CD14-positive monocyte (primary cell): ENCODE measurements at regions of chr17 and their contacts with region 1.

Region 1: GRCh38 chr17:8138672-8139371 is 13.4 kb downstream of the PER1 start:
- DNase-seq: peak; percentile 88 to 93 (median 90)
- H3K4me3 ChIP-seq: peak overlapping the region; percentile 4 to 68 (median 21)
- H3K4me3 Mint-ChIP-seq: no peak overlapping the region
- H3K27ac ChIP-seq: peak overlapping the region; percentile 55 to 58
- H3K27ac Mint-ChIP-seq: no peak overlapping the region
- H3K4me1 ChIP-seq: peaks cover 34 to 40% of the 10 kb centered on the region in 2 donors
- H3K4me1 Mint-ChIP-seq: no peaks in the 10 kb centered on the region
- H3K27me3 ChIP-seq: peaks cover 0 to 10% of the 10 kb centered on the region in 2 donors
- H3K27me3 Mint-ChIP-seq: peaks cover 6 to 18% (median 11%) of the 10 kb centered on the region in 3 donors
- CTCF ChIP-seq: peak; percentile 94

Region 2: DNA sequence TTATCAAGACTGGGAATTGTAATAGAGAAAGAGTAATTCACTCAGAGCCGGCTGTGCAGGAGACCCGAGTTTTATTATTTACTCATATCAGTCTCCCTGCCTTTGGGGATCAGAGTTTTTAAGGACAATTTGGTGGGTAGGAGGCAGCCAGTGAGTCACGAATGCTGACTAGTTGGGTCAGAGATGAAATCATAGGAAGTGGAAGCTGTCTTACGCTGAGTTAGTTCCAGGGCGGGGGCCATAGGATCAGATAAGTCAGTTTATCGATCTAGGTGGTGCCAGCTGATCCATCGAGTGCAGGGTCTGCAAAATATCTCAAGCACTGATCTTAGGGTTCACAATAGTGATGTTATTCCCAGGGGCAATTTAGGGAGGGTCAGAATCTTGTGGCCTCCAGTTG is 156.7 kb before region 1 on chr17:
- intact Hi-C with region 1: no loop called
- DNase-seq: peak; percentile 43 to 65 (median 65)
- H3K4me3 ChIP-seq: no peak overlapping the region
- H3K4me3 Mint-ChIP-seq: no peak overlapping the region
- H3K27ac ChIP-seq: no peak overlapping the region
- H3K27ac Mint-ChIP-seq: peak overlapping the region in 2 of 7 donors; percentile 67 to 82
- H3K4me1 ChIP-seq: peaks cover 3 to 12% of the 10 kb centered on the region in 2 donors
- H3K4me1 Mint-ChIP-seq: peaks cover 12% of the 10 kb centered on the region
- H3K27me3 ChIP-seq: no peaks in the 10 kb centered on the region
- H3K27me3 Mint-ChIP-seq: peaks cover 0 to 2% (median 2%) of the 10 kb centered on the region in 3 donors
- CTCF ChIP-seq: no peak

Region 3: DNA sequence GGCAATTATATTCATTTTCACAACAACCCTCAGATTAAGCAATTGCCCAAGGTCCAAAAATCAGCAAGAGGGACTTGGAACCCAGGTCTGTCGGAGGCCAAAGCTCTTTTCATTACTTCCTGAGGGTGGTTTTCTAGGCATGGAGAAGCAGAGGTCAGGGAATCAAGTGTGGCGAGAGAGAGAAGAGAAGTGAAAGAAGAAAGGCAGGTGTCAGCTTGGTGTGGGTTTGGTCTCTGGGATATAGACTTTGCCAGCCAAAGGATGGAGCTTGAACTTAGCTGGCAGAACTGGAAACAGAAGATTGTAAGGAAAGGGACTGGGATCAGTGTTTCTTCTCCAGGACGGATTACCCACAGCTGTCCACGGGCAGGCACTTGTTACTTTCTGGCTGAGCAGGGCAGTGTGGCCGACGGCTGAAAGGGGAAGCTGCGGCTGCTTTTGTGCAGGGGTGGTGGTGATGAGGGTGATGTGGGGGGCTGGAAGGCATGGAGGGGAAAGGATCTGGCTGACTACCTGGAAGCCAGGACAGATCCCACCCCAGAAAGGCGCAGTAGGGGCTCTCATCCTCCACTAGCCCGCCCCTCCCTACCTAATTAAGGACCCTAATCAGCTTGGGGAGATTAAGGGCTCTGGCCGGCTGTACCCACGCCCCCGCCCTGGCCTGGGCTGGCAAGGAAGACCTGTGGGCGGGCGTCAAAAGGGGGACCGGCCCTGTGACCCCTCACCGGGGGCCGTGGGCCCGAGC is 136.7 kb before region 1 on chr17 and contains the start of gene GUCY2D:
- intact Hi-C with region 1: no loop called
- DNase-seq: peak in 2 of 3 donors; percentile 44 to 49
- H3K4me3 ChIP-seq: peak within 1 kb of the TSS; percentile 36 to 77 (median 73)
- H3K4me3 Mint-ChIP-seq: peak within 1 kb of the TSS; percentile 96 to 98
- H3K27ac ChIP-seq: peak within 1 kb of the TSS in 1 of 2 donors; percentile 27
- H3K27ac Mint-ChIP-seq: peak within 1 kb of the TSS; percentile 41 to 85 (median 63)
- H3K4me1 ChIP-seq: peaks cover 15 to 24% of the 10 kb centered on the region in 2 donors
- H3K4me1 Mint-ChIP-seq: peaks cover 31% of the 10 kb centered on the region
- H3K27me3 ChIP-seq: peaks cover 0 to 12% of the 10 kb centered on the region in 2 donors
- H3K27me3 Mint-ChIP-seq: peaks cover 15 to 20% (median 19%) of the 10 kb centered on the region in 3 donors
- CTCF ChIP-seq: no peak
- polyA plus RNA-seq, gene GUCY2D: 0.04 to 0.46 TPM in 2 of 3 donors, not detected in the other

Region 4: DNA sequence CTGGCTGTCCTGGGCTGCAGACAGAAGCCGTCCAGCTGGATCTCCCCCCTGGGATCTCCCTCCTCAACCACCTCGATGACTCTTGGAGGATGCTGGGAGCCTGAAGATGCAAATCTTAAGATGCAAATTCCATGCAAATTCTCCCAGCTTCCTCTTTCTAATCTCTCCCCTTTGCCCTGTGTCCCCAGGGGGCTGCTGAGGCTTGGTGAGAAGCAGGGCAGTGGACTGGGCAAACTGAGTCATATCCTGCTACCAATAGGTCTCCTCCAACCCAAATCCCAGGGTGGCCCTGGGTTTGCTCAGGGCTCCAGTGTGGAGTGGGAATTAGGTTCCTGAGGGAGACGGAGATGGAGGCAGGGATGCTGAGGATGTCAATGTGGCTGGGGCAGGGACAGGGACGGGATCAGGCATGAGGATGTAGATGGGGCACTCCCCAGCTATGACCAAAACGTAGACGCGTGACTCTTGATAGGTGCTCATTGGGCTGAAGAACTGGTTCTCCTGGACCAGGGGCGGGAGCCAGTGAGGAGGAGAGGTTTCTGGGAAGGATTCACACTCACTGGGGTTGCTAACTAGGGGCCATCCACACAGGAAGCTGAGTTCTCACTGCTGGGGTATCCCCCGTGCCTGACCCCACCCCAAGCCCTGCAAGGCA is 47.7 kb before region 1 on chr17:
- intact Hi-C with region 1: no loop called
- DNase-seq: peak in 2 of 3 donors; percentile 17 to 63
- H3K4me3 ChIP-seq: no peak overlapping the region
- H3K4me3 Mint-ChIP-seq: peak overlapping the region in 1 of 2 donors; percentile 37
- H3K27ac ChIP-seq: no peak overlapping the region
- H3K27ac Mint-ChIP-seq: no peak overlapping the region
- H3K4me1 ChIP-seq: peaks cover 0 to 7% of the 10 kb centered on the region in 2 donors
- H3K4me1 Mint-ChIP-seq: peaks cover 9% of the 10 kb centered on the region
- H3K27me3 ChIP-seq: peaks cover 0 to 10% of the 10 kb centered on the region in 2 donors
- H3K27me3 Mint-ChIP-seq: peaks cover 25 to 58% (median 34%) of the 10 kb centered on the region in 3 donors
- CTCF ChIP-seq: no peak

Region 5: DNA sequence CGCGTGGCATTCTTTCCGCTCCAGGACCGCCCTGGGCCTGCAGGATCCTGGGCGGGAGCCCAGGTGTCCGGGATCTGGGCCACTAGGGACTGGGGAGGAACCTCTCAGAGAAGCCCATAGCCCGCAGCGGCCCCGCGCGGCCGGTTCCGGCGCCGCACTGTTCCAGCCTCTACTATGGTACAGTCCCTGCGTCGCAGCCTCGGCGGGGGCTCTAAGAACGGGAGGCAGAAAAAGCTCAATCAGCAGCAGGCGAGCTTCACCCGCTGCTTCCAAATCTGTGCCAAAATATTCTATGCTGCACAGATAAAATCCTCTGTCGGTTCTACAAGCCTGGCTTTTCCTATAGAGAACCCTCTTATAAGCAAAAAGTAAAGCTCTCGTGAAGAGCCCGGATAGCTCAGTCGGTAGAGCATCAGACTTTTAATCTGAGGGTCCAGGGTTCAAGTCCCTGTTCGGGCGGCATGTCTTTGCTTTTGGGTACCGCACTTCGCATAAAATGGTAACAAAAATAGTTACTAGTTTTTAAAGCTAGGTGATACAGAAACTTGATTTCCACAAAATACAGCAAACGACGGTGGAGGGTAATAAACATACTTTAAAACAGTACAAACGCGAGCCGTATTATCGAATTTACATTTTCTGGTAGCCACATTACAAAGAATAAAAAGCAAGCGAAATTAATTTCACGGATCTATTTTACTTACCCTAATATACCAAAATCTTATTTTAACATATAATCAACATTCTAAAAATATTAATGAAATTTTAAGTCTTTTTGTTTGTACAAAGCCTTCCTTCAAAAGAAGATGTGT is 19.8 kb before region 1 on chr17:
- intact Hi-C with region 1: no loop called
- DNase-seq: peak; percentile 60 to 85 (median 79)
- H3K4me3 ChIP-seq: peak overlapping the region; percentile 45 to 77 (median 61)
- H3K4me3 Mint-ChIP-seq: peak overlapping the region; percentile 85 to 93
- H3K27ac ChIP-seq: no peak overlapping the region
- H3K27ac Mint-ChIP-seq: peak overlapping the region; percentile 85 to 91 (median 87)
- H3K4me1 ChIP-seq: peaks cover 56 to 69% of the 10 kb centered on the region in 2 donors
- H3K4me1 Mint-ChIP-seq: peaks cover 61% of the 10 kb centered on the region
- H3K27me3 ChIP-seq: peaks cover 45 to 78% of the 10 kb centered on the region in 2 donors
- H3K27me3 Mint-ChIP-seq: peaks cover 73 to 91% (median 88%) of the 10 kb centered on the region in 3 donors
- CTCF ChIP-seq: peak; percentile 96

Region 6: DNA sequence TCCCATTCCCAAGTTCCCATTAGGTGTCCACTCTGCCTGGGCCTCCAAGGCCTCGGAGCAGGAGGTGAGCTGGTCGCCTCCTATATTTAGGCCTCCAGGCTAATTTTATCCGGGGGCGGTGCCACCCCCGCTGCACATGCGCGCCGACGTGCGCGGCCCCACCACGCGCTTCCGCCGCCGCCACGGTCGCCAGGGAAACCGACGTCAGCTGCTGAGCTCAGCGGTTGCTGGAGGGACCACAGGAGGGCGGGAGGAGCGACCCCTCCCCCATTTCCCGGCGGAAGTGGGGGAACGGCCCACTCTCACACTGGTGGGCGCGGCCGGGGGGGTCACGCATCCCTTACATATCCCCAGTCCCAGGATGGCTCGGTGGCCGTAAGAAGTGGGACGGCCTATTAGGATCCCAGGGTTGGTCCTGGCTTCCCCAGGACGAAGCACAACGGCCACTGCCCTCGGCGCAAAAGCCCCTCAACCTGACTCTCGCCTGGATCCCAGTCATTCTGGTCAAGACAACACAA is 12.4 kb after region 1 on chr17:
- intact Hi-C with region 1: loop called in 1 of 2 experiments (anchors 1 kb)
- DNase-seq: peak; percentile 72 to 75 (median 75)
- H3K4me3 ChIP-seq: peak overlapping the region; percentile 52 to 100 (median 88)
- H3K4me3 Mint-ChIP-seq: peak overlapping the region; percentile 97 to 99
- H3K27ac ChIP-seq: peak overlapping the region; percentile 97 to 99
- H3K27ac Mint-ChIP-seq: peak overlapping the region in 5 of 7 donors; percentile 78 to 99 (median 96)
- H3K4me1 ChIP-seq: peaks cover 46 to 60% of the 10 kb centered on the region in 2 donors
- H3K4me1 Mint-ChIP-seq: peaks cover 28% of the 10 kb centered on the region
- H3K27me3 ChIP-seq: no peaks in the 10 kb centered on the region
- H3K27me3 Mint-ChIP-seq: peaks cover 0 to 14% (median 0%) of the 10 kb centered on the region in 3 donors
- CTCF ChIP-seq: no peak

Region 7: GRCh38 chr17:8156246-8156992 is 17.6 kb after region 1 on chr17:
- intact Hi-C with region 1: loop called in 1 of 2 experiments (anchors 2 kb)
- DNase-seq: peak; percentile 100
- H3K4me3 ChIP-seq: peak overlapping the region; percentile 65 to 100 (median 88)
- H3K4me3 Mint-ChIP-seq: no peak overlapping the region
- H3K27ac ChIP-seq: peak overlapping the region; percentile 89 to 99
- H3K27ac Mint-ChIP-seq: no peak overlapping the region
- H3K4me1 ChIP-seq: peaks cover 63 to 93% of the 10 kb centered on the region in 2 donors
- H3K4me1 Mint-ChIP-seq: peaks cover 50% of the 10 kb centered on the region
- H3K27me3 ChIP-seq: no peaks in the 10 kb centered on the region
- H3K27me3 Mint-ChIP-seq: peaks cover 0 to 5% (median 0%) of the 10 kb centered on the region in 3 donors
- CTCF ChIP-seq: no peak

Region 8: DNA sequence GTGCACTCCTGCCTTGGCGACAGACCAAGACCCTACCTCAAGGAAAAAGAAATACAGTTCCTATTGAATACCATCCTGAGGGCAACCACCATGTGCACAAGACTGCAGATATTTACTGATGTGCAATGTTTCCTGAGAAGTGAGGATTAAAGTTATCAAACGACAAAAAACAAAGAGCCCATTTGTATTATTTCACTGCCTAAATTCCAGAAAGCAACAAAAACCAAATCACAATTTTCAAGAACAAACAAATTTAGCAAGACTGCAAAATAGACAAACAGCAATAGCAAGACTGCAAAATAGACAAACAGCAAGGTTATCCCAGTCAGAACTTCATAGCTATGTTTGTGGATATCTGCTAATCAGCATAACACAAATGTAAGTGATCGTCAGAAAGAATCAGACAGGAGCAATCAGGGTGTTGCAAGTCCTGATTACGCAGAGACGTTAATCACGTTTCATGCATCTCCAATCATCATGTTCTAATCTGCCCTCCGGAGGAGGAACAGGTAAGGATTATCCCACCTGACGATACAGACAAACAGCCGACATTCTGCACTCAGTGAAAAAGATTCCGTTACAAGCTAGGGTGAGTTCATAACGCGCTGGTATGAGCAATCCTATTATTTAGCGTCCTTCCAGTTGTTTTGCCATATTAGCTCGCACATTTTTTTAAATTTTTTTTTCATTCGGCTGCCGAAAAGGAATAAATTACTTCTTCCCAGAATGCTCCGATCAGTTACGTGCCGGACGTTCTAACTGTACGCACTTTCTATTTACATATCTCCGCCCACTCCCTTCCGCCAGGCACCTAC is 34.4 kb after region 1 on chr17:
- intact Hi-C with region 1: loop called in 1 of 2 experiments (anchors 5 kb)
- DNase-seq: peak; percentile 92 to 95 (median 93)
- H3K4me3 ChIP-seq: peak overlapping the region; percentile 18 to 70 (median 39)
- H3K4me3 Mint-ChIP-seq: peak overlapping the region; percentile 41 to 86
- H3K27ac ChIP-seq: peak overlapping the region; percentile 65 to 98
- H3K27ac Mint-ChIP-seq: peak overlapping the region; percentile 98 to 100 (median 99)
- H3K4me1 ChIP-seq: peaks cover 31 to 48% of the 10 kb centered on the region in 2 donors
- H3K4me1 Mint-ChIP-seq: peaks cover 41% of the 10 kb centered on the region
- H3K27me3 ChIP-seq: no peaks in the 10 kb centered on the region
- H3K27me3 Mint-ChIP-seq: no peaks in the 10 kb centered on the region
- CTCF ChIP-seq: no peak

Region 9: GRCh38 chr17:8294814-8295316 is 156.0 kb after region 1 on chr17:
- intact Hi-C with region 1: loop called in 1 of 2 experiments (anchors 10 kb)
- DNase-seq: no peak
- H3K4me3 ChIP-seq: peak overlapping the region; percentile 56 to 87 (median 80)
- H3K4me3 Mint-ChIP-seq: peak overlapping the region; percentile 82 to 95
- H3K27ac ChIP-seq: peak overlapping the region; percentile 80 to 89
- H3K27ac Mint-ChIP-seq: peak overlapping the region; percentile 82 to 96 (median 92)
- H3K4me1 ChIP-seq: peaks cover 28 to 32% of the 10 kb centered on the region in 2 donors
- H3K4me1 Mint-ChIP-seq: peaks cover 42% of the 10 kb centered on the region
- H3K27me3 ChIP-seq: no peaks in the 10 kb centered on the region
- H3K27me3 Mint-ChIP-seq: peaks cover 0 to 2% (median 0%) of the 10 kb centered on the region in 3 donors
- CTCF ChIP-seq: no peak